Dendritic cell treated with granulocyte-macrophage colony-stimulating factor and Interleukin-4, amounts not matched to agents 40 ng/mL and 50 ng/mL, for 4 days (primary cell): ENCODE measurements at regions of chr11 and their contacts with region 1.

Region 1: GRCh38 chr11:37124384-37124783 is 526.3 kb upstream of the RAG2 start:
- H3K4me3 Mint-ChIP-seq: no peak overlapping the region
- H3K27ac Mint-ChIP-seq: no peak overlapping the region
- H3K4me1 Mint-ChIP-seq: no peaks in the 10 kb centered on the region
- H3K27me3 Mint-ChIP-seq: no peaks in the 10 kb centered on the region

Region 2: DNA sequence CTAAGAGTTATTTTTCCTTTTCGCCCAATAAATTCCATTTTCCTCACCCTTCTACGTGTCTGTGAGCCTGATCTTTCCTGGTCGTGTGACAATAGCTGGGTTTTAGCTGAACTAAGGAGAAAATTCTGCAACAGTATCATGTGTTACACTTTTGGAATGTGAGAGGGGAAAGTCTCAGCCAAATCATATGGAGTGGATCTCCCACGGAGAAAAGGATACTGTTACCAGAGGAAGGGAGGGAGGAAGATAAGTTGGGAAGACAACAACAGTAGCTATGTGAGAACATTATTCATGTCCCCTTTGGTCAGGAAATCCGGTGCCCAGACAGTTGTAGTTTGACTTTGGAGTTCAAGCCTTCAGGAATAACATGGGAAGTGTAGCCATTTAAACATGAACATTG is 57.6 kb after region 1 on chr11:
- intact Hi-C with region 1: loop called (anchors 10 kb)
- H3K4me3 Mint-ChIP-seq: no peak overlapping the region
- H3K27ac Mint-ChIP-seq: no peak overlapping the region
- H3K4me1 Mint-ChIP-seq: no peaks in the 10 kb centered on the region
- H3K27me3 Mint-ChIP-seq: no peaks in the 10 kb centered on the region